Activated naive CD8-positive, alpha-beta T cell treated with anti-CD3 and anti-CD28 coated beads, Interleukin-2, amount 10 ng/mL, durations not matched to agents 7 days and 5 days (primary cell): ENCODE measurements at regions of chr16 and their contacts with region 1.

Region 1: GRCh38 chr16:2251483-2252240 is at the start of gene ECI1:
- DNase-seq: peak; percentile 90
- ATAC-seq: peak; percentile 84
- H3K4me3 Mint-ChIP-seq: peak within 1 kb of the TSS; percentile 96
- H3K27ac Mint-ChIP-seq: peak within 1 kb of the TSS; percentile 95
- H3K4me1 Mint-ChIP-seq: peaks cover 4% of the 10 kb centered on the region
- H3K27me3 Mint-ChIP-seq: no peaks in the 10 kb centered on the region
- total RNA-seq, gene ECI1: 37.4 to 38.0 TPM

Region 2: DNA sequence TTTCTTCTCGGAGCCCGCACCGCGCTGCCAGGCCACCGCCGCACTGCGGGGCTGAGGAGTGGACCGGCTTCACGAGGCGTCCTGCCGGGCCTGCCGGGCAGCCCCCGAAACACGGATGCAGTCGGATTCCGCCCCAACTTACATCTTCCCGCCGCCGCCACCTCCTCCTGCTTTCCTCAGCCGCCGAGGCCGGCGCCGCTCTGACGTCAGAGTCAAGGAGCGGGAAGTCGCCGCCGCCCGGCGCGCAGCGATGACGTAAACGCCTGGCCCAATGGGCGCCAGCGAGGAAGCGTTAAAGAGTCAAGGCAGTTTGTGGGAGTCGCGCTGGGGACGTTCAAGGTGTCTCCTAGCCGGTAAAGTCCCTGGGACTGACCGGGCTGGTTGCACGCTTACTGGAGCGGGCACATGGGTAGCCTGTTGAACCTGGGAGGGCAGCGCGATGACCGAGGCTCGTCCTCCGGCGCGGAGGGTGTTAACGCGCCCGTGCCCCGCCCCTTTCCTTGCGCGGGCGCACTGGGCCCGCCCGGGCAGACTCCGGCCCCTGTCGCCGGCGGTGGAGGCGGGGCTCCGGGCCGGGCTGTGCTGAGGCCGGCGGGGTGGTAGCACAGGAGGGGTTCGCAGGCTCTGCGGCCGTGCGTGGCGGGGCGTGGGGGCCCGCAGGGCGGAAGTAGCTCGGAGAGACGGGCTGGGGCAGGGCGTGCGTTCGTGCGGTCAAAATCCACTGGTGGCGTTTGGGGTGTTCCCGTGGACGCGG is 16.4 kb after region 1 on chr16 and contains the start of gene RNPS1:
- POLR2A ChIA-PET with region 1: interaction called, 27 read pairs
- DNase-seq: peak; percentile 99
- ATAC-seq: peak; percentile 84
- H3K4me3 Mint-ChIP-seq: peak within 1 kb of the TSS; percentile 95
- H3K27ac Mint-ChIP-seq: peak within 1 kb of the TSS; percentile 97
- H3K4me1 Mint-ChIP-seq: peaks cover 27% of the 10 kb centered on the region
- H3K27me3 Mint-ChIP-seq: no peaks in the 10 kb centered on the region
- total RNA-seq, gene RNPS1: 212 to 220 TPM